Activated CD4-positive, alpha-beta T cell treated with anti-CD3 and anti-CD28 coated beads, Interleukin-2, amount 10 ng/mL, durations not matched to agents 7 days and 5 days (primary cell): ENCODE measurements at regions of chr2 and their contacts with region 1.

Region 1: DNA sequence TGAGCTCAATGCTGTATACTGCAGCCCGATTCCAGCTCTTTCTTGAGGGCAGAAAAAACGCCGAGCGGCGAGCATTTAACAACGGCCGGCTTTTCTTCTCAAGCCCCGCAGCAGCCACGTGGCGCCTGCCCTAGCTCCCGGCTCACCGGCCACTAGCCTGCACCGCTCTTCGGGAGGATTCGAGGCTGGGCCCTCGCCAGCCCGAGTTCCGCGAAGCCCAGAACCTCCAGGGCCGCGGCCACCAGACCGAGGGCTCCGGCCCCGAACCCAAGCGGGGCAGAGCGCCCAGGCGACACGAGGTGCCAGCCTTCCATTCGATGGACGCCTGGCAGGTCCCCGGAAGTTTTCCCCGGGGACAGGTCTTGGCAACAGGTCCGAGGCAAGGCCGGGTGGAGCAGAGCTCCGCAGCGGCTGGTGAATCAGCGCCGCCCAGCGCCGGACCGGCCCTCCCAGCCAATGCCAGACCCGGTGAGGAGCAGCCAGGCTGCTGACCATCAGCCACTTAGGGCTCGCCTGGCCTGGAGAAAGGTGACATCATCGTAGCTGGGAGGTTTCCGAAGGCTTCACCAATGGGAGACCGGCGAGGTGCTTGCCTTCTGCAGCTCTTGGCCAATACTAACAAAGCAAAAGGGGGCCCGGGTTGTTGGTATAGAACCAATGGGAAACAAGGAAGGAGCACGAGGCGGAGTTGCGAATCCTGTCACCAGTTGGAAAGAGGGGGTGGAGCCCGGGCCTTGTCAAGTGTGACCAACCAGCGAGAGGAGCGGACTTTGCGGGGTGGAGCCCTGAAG is 544 bp upstream of the MXD1 start:
- DNase-seq: peak; percentile 100
- H3K4me3 Mint-ChIP-seq: peak overlapping the region; percentile 81
- H3K27ac Mint-ChIP-seq: peak overlapping the region; percentile 90
- H3K4me1 Mint-ChIP-seq: peaks cover 43% of the 10 kb centered on the region
- H3K27me3 Mint-ChIP-seq: no peaks in the 10 kb centered on the region

Region 2: DNA sequence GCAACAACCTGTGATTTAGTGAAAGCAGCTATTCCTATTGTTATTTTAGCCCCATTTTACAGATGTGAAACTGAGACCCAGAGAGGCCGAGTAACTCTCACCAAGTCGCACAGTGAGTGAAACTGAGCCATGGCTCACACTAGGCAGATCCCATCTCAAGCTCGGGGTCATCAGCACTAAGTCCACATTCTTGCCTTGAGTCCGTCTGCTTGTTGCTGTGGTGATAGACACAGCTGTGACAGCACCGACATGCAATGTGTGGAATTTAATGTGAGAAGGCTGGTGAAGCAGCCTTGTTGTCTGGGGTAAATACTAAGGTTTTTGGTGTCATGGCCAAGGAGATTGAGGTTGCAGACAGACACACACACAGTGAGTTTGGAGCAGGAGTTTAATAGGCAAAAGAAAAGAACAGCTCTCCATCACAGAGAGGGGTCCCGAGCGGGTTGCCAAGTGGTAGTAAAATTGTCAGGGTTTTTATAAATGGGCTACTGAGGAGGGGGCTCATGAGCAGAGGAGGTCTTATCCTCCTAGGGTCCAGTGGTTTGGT is 125.1 kb before region 1 on chr2:
- CTCF ChIA-PET with region 1: no interaction called
- POLR2A ChIA-PET with region 1: no interaction called
- DNase-seq: no peak
- H3K4me3 Mint-ChIP-seq: no peak overlapping the region
- H3K27ac Mint-ChIP-seq: peak overlapping the region; percentile 3
- H3K4me1 Mint-ChIP-seq: peaks cover 18% of the 10 kb centered on the region
- H3K27me3 Mint-ChIP-seq: no peaks in the 10 kb centered on the region

Region 3: GRCh38 chr2:69933254-69933828 is 19.0 kb after region 1 on chr2:
- CTCF ChIA-PET with region 1: interaction called, 10 read pairs
- POLR2A ChIA-PET with region 1: no interaction called
- DNase-seq: no peak
- H3K4me3 Mint-ChIP-seq: no peak overlapping the region
- H3K27ac Mint-ChIP-seq: no peak overlapping the region
- H3K4me1 Mint-ChIP-seq: peaks cover 26% of the 10 kb centered on the region
- H3K27me3 Mint-ChIP-seq: no peaks in the 10 kb centered on the region

Region 4: DNA sequence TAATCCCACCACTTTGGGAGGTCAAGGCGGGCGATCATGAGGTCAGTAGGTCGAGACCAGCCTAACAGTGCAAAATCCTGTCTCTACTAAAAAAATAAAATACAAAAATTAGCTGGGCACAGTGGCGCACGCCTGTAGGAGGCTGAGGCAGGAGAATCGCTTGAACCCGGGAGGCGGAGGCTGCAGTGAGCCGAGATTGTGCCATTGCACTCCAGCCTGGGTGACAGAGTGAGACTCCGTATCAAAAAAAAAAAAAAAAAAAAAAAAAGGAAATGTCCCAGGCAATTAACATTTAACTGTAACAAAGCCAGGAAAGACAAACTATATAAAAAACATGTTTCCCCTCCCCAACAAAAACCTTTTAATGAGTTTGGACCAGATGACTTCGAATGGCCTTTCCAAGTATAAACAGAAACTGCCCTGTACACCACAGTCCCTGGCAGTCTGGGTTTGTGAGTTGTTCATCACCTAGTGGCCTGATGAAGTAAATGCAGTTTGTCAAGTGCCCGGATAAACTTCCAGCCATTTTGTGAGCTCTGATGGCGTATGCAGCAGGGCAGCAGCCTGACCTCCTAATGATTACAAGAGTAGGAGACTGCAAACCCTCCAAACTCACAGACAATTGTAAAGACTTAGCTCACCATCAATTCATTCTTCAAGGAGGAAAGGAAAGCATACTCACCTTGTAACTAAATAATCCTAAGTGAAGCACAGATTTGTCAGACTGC is 156.3 kb after region 1 on chr2:
- CTCF ChIA-PET with region 1: interaction called, 24 read pairs
- POLR2A ChIA-PET with region 1: interaction called, 4 read pairs
- DNase-seq: peak; percentile 75
- H3K4me3 Mint-ChIP-seq: peak overlapping the region; percentile 47
- H3K27ac Mint-ChIP-seq: peak overlapping the region; percentile 93
- H3K4me1 Mint-ChIP-seq: peaks cover 49% of the 10 kb centered on the region
- H3K27me3 Mint-ChIP-seq: no peaks in the 10 kb centered on the region

Region 5: DNA sequence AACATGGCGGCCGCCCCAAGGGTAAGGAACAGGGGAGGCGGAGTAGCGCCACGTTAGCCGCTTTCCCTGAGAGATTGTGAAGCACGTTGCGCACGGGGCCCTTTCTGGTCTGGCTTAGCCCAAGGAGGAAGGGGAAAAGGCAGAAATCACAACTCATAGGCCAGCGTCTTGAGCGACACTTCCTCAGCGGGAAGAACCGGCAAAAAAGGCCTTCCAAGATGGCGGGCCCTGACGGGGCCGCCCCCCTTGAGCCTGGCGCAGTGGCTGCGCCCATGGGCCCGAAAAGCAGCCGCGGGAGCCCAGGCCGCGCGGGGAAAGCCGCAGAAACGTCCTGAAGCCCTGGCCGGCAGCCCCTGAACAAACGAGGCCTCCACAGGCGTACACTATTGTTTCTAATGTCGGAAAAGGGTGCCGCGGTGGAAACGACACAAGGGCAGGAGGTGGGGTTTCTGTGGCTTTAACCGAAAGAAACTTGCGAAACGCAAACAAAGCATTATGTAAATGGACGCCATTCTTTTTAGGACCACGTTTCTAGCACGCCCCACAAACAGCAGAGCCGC is 172.0 kb after region 1 on chr2:
- CTCF ChIA-PET with region 1: interaction called, 12 read pairs
- POLR2A ChIA-PET with region 1: interaction called, 3 read pairs
- DNase-seq: peak; percentile 84
- H3K4me3 Mint-ChIP-seq: peak overlapping the region; percentile 98
- H3K27ac Mint-ChIP-seq: peak overlapping the region; percentile 100
- H3K4me1 Mint-ChIP-seq: peaks cover 51% of the 10 kb centered on the region
- H3K27me3 Mint-ChIP-seq: no peaks in the 10 kb centered on the region